ENCODE measurements at regions of chr12 and their contacts with region 1.

Region 1: GRCh38 chr12:83365317-83365716 is 678.6 kb downstream of the TMTC2 start:
- DNase-seq: no peak

Region 2: GRCh38 chr12:82964446-82964845 is 400.9 kb before region 1 on chr12:
- intact Hi-C with region 1: no loop called
- DNase-seq: no peak

Region 3: DNA sequence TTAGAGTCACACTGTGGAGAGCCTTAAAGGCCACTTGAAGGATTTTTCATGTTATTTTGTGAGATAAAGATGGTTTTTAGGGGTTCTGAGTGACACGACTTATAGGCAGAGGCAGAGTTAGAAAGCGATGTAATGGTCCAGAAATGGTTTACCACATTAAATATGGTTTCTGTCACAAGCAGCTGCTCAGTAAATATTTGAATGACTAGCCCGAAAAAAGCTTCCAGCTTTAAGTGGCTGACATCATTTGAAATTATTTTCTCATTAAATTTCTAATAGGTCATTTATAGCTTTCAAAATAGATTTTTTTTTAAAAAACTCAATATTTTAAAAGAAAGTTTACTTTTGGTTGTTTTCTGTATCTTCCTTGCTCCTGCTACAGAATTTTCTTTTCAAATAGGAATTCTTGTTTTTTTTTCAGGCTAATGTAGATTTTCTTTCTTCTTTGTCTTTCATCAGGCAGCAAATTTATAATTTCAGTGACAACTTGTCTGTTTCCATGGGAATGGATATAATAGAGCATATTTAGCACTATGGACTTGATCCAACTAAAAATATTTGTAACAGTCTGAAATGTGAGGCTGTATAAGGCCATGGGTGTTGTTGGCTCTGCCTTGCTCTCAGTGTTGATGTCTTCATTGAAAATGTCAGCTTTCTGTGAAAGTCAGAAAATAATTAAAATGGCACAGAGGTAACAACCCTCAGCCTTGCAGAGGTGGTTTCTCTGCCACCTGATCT is 21.4 kb after region 1 on chr12:
- intact Hi-C with region 1: loop called in 1 of 2 experiments (anchors 1 kb)
- DNase-seq: no peak

Region 4: DNA sequence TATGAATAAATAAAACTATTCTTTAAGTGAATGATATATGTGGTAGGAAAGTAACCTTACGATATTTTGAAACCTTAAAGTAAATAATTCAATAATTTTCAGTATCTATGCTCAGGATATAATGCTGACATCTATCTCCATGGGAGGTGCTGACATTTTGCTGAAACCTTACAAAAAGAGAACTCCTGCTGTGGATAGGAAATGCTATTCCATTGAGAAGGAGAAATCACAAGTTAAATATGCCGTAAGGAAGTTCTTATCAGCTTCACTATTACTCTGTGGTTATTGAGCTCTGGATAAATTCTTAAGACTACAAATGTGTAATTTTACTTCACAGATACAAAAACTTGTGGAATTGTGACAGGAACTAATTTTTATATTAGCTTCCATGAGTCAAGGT is 43.5 kb after region 1 on chr12:
- intact Hi-C with region 1: no loop called
- DNase-seq: no peak

Region 5: GRCh38 chr12:83796527-83796926 is 431.2 kb after region 1 on chr12:
- intact Hi-C with region 1: loop called in 1 of 2 experiments (anchors 10 kb)
- DNase-seq: no peak